Mammary epithelial cell (primary cell): ENCODE measurements at regions of chr9 and their contacts with region 1.

Region 1: DNA sequence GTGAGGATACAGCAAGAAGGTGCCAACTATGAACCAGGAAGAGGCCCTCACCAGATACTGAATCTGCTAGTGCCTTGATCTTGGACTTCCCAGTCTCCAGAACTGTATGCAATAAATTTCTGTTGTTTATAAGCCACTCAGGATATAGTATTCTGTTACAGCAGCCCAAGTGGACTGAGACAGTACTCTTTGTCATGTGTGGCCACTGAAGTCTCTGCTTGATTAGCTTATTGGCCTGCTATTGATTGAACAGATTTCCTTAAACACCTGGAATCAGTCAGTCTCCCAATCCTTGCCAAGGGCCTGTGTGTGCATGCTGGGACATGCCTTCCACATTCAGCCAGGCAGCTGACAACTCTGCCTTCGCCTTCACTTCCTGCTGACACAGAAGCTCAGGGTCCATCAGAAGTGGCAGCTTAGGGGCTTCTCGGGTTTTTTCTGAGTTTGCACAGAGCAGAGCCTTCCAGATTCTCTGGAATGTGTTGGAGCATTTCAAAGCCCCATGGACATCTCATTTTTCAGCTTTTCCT is 13.7 kb upstream of the ROR2 start:
- DNase-seq: peak; percentile 28
- H3K4me3 ChIP-seq: no peak overlapping the region
- H3K27ac ChIP-seq: no peak overlapping the region
- H3K4me1 ChIP-seq: peaks cover 7% of the 10 kb centered on the region
- H3K27me3 ChIP-seq: no peaks in the 10 kb centered on the region
- CTCF ChIP-seq: no peak

Region 2: GRCh38 chr9:91898451-91899218 is 65.1 kb before region 1 on chr9:
- CTCF ChIA-PET with region 1: no interaction called
- dilution Hi-C with region 1: no loop called
- in situ Hi-C with region 1: no loop called
- intact Hi-C with region 1: no loop called
- DNase-seq: no peak
- H3K4me3 ChIP-seq: no peak overlapping the region
- H3K27ac ChIP-seq: no peak overlapping the region
- H3K4me1 ChIP-seq: no peaks in the 10 kb centered on the region
- H3K27me3 ChIP-seq: no peaks in the 10 kb centered on the region
- CTCF ChIP-seq: no peak

Region 3: GRCh38 chr9:91914405-91914804 is 49.4 kb before region 1 on chr9:
- CTCF ChIA-PET with region 1: no interaction called
- dilution Hi-C with region 1: loop called (anchors 5 kb)
- in situ Hi-C with region 1: no loop called
- intact Hi-C with region 1: no loop called
- DNase-seq: no peak
- H3K4me3 ChIP-seq: no peak overlapping the region
- H3K27ac ChIP-seq: no peak overlapping the region
- H3K4me1 ChIP-seq: no peaks in the 10 kb centered on the region
- H3K27me3 ChIP-seq: no peaks in the 10 kb centered on the region
- CTCF ChIP-seq: no peak

Region 4: DNA sequence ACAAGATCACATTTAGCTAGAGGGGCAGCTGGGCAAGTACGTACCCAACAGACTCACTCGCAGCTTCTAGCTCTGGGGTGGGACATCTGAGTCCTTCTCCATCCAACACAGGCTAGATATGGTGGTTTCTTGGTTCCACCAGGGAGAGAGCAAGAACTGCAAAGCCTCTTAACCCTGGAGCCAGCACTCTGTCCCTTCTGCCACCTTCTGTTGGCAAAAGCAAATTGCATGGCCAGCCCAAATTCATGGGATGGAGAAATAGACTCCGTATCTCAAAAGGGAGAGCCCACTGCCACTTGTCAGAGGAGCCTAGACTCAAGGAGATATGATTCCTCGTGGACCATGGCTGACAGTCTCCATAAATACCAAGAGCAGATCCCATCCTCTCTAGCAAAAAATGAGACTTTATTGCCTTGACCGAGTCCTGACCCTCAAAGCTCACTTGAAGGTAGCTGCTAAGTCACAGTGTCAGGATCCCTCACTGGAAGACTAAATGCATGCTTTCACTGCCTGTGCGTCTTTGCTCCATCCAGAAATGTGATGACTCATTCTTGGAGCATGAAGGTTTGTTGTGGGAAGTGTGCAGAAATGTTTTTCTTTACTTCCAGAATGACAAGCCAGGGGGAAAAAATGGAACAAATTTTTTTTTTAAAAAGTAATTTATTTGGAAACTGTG is 15.1 kb after region 1 on chr9:
- CTCF ChIA-PET with region 1: no interaction called
- dilution Hi-C with region 1: no loop called
- in situ Hi-C with region 1: no loop called
- intact Hi-C with region 1: no loop called
- DNase-seq: peak; percentile 62
- H3K4me3 ChIP-seq: no peak overlapping the region
- H3K27ac ChIP-seq: no peak overlapping the region
- H3K4me1 ChIP-seq: peaks cover 4% of the 10 kb centered on the region
- H3K27me3 ChIP-seq: no peaks in the 10 kb centered on the region
- CTCF ChIP-seq: peak in 1 of 2 donors; percentile 37

Region 5: DNA sequence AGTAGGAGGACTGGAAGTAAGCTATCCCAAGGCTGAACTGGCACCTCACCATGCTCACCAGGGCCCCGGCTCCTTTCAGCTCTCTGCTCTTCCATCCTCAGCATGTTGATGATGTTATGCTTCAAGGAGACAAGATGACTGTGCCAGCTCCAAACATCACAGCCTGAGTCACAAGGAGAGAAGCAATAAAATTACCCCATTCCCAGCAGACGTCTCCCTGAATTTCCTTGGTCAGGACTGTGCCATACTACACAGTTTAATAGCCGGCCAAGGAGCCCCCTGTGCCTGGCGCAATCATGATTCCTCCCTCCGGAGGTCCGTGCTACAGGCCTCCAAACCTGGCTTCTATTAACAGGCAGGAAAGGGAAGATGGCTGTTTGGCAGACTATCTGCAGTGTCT is 37.5 kb after region 1 on chr9:
- CTCF ChIA-PET with region 1: no interaction called
- dilution Hi-C with region 1: loop called (anchors 5 kb)
- in situ Hi-C with region 1: no loop called
- intact Hi-C with region 1: no loop called
- DNase-seq: no peak
- H3K4me3 ChIP-seq: no peak overlapping the region
- H3K27ac ChIP-seq: no peak overlapping the region
- H3K4me1 ChIP-seq: no peaks in the 10 kb centered on the region
- H3K27me3 ChIP-seq: peaks cover 2% of the 10 kb centered on the region
- CTCF ChIP-seq: no peak